Activated CD8-positive, alpha-beta T cell treated with anti-CD3 and anti-CD28 coated beads for 36 hours (primary cell): ENCODE measurements at regions of chr16 and their contacts with region 1.

Region 1: DNA sequence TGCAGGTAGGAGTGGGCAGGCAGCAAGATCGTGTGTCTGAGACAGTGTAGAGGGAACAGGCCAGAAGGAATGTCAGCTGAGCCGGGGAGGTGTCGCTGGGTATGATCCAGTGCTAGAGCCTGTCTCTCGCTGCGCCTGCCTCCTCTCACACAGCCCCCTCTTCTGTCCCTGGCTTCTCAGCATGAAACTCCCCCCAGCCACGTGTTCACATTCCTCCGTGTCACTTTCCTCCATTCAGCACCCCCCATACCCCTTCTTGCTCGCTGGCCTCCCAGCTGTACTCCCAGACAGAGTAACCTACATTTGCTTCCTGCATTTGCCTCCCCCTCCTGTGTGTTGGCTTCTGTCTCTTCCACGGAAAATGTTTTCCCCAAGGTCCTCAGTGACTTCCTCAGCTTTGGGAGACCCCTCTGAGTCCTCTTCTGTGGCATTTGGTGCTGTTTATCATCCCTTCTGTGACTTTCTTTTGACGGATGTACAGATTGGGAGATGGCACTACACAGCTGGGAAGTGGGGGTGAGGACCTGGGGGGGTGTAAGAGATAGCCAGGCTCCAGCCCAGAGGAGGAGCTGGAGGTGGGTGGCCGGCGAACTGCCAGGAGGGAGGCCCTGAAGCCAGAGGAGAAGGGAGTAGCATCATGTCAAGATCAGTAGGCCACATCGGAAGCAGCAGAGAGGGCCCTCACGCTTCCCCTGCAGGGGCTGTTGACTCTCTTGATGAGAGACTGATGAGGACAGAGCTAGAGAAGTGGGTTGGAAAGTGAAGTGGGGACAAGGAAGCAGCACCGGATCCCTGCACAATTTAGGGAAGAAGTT is 19.2 kb downstream of the SGF29 start:
- DNase-seq: no peak
- ATAC-seq: no peak
- H3K4me3 Mint-ChIP-seq: no peak overlapping the region
- H3K27ac Mint-ChIP-seq: no peak overlapping the region
- H3K4me1 Mint-ChIP-seq: peaks cover 20% of the 10 kb centered on the region
- H3K27me3 Mint-ChIP-seq: no peaks in the 10 kb centered on the region
- CTCF ChIP-seq: no peak

Region 2: DNA sequence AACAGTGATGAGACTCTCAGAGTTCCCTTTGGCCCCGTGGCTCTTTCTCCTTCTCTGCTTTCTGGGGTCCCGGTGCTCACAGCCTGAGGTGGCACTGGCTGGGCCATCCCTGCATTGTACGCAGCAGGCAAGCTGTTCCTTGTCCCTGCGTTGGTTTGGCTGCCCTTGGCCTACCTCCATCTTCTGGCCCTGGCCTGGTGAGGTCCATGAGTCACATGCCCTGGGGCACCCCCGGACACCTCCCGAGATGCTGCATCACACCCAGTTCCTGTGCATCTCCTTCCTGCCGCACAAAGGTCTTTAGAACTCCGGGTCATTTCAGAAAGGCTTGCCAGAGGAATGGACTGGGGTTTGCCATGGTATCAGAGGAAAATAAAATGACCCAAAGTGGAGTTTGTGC is 14.5 kb after region 1 on chr16:
- CTCF ChIA-PET with region 1: no interaction called
- POLR2A ChIA-PET with region 1: no interaction called
- intact Hi-C with region 1: loop called (anchors 2 kb)
- DNase-seq: no peak
- ATAC-seq: no peak
- H3K4me3 Mint-ChIP-seq: no peak overlapping the region
- H3K27ac Mint-ChIP-seq: peak overlapping the region; percentile 5
- H3K4me1 Mint-ChIP-seq: no peaks in the 10 kb centered on the region
- H3K27me3 Mint-ChIP-seq: no peaks in the 10 kb centered on the region
- CTCF ChIP-seq: no peak